ENCODE measurements at regions of chr1 and their contacts with region 1.

Region 1: GRCh38 chr1:8423650-8424538 is 106.0 kb downstream of the SLC45A1 start:
- DNase-seq: peak in 5 of 9 donors; percentile 28 to 68 (median 42)
- ATAC-seq: peak; percentile 56
- H3K4me3 ChIP-seq: peak overlapping the region; percentile 96
- H3K4me3 Mint-ChIP-seq: peak overlapping the region in 9 of 10 donors; percentile 81 to 97 (median 92)
- H3K27ac ChIP-seq: peak overlapping the region; percentile 83
- H3K27ac Mint-ChIP-seq: peak overlapping the region; percentile 85 to 99 (median 94)
- H3K4me1 ChIP-seq: peaks cover 57 to 68% of the 10 kb centered on the region in 2 donors
- H3K4me1 Mint-ChIP-seq: peaks cover 39 to 47% (median 45%) of the 10 kb centered on the region in 7 donors
- H3K27me3 ChIP-seq: no peaks in the 10 kb centered on the region
- H3K27me3 Mint-ChIP-seq: no peaks in the 10 kb centered on the region

Region 2: GRCh38 chr1:8197493-8198282 is 226.2 kb before region 1 on chr1:
- CTCF ChIA-PET with region 1: no interaction called
- POLR2A ChIA-PET with region 1: no interaction called
- intact Hi-C with region 1: no loop called
- DNase-seq: no peak
- ATAC-seq: no peak
- H3K4me3 ChIP-seq: no peak overlapping the region
- H3K4me3 Mint-ChIP-seq: peak overlapping the region in 1 of 10 donors; percentile 7
- H3K27ac ChIP-seq: no peak overlapping the region
- H3K27ac Mint-ChIP-seq: no peak overlapping the region
- H3K4me1 ChIP-seq: no peaks in the 10 kb centered on the region
- H3K4me1 Mint-ChIP-seq: peaks cover 0 to 20% (median 9%) of the 10 kb centered on the region in 7 donors
- H3K27me3 ChIP-seq: no peaks in the 10 kb centered on the region
- H3K27me3 Mint-ChIP-seq: peaks cover 0 to 10% (median 0%) of the 10 kb centered on the region in 5 donors

Region 3: GRCh38 chr1:8382051-8382505 is 41.8 kb before region 1 on chr1:
- CTCF ChIA-PET with region 1: interaction called, 4 read pairs
- POLR2A ChIA-PET with region 1: interaction called, 3 read pairs
- intact Hi-C with region 1: loop called in 1 of 2 experiments (anchors 2 kb)
- DNase-seq: no peak
- ATAC-seq: no peak
- H3K4me3 ChIP-seq: no peak overlapping the region
- H3K4me3 Mint-ChIP-seq: peak overlapping the region; percentile 19 to 87 (median 78)
- H3K27ac ChIP-seq: peak overlapping the region; percentile 52
- H3K27ac Mint-ChIP-seq: peak overlapping the region in 7 of 9 donors; percentile 23 to 98 (median 90)
- H3K4me1 ChIP-seq: peaks cover 30 to 61% of the 10 kb centered on the region in 2 donors
- H3K4me1 Mint-ChIP-seq: peaks cover 51 to 96% (median 91%) of the 10 kb centered on the region in 7 donors
- H3K27me3 ChIP-seq: no peaks in the 10 kb centered on the region
- H3K27me3 Mint-ChIP-seq: no peaks in the 10 kb centered on the region

Region 4: DNA sequence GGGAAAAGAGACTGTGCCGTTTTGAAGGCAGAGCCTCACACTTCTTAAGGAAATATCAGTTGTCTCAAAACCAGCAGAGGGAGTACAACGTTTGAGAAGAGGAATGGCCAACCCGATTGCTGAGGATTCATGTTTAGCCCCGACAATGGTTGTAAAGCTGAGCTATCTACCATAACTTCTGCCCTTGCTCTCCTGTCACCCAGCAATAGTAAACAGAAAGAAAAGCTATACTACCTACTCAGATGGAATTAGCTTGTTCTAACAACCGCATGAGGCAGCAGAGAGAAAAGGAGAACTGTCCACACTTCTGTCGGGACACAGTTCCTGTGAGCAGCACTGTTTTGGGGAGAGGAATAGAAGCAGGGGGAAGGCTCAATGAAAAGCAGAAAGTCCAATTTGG is 14.8 kb before region 1 on chr1:
- CTCF ChIA-PET with region 1: interaction called, 14 read pairs
- POLR2A ChIA-PET with region 1: interaction called, 7 read pairs
- intact Hi-C with region 1: loop called (anchors 1 to 2 kb)
- DNase-seq: peak in 5 of 9 donors; percentile 12 to 45 (median 38)
- ATAC-seq: peak; percentile 82
- H3K4me3 ChIP-seq: no peak overlapping the region
- H3K4me3 Mint-ChIP-seq: peak overlapping the region; percentile 38 to 74 (median 68)
- H3K27ac ChIP-seq: peak overlapping the region; percentile 49
- H3K27ac Mint-ChIP-seq: peak overlapping the region; percentile 22 to 90 (median 81)
- H3K4me1 ChIP-seq: peaks cover 25 to 44% of the 10 kb centered on the region in 2 donors
- H3K4me1 Mint-ChIP-seq: peaks cover 47 to 87% (median 72%) of the 10 kb centered on the region in 7 donors
- H3K27me3 ChIP-seq: no peaks in the 10 kb centered on the region
- H3K27me3 Mint-ChIP-seq: no peaks in the 10 kb centered on the region

Region 5: GRCh38 chr1:8477166-8477982 is 53.5 kb after region 1 on chr1:
- CTCF ChIA-PET with region 1: no interaction called
- POLR2A ChIA-PET with region 1: interaction called, 7 read pairs
- intact Hi-C with region 1: loop called (anchors 2 kb)
- DNase-seq: no peak
- ATAC-seq: no peak
- H3K4me3 ChIP-seq: no peak overlapping the region
- H3K4me3 Mint-ChIP-seq: peak overlapping the region in 1 of 10 donors; percentile 23
- H3K27ac ChIP-seq: no peak overlapping the region
- H3K27ac Mint-ChIP-seq: peak overlapping the region in 7 of 9 donors; percentile 2 to 84 (median 55)
- H3K4me1 ChIP-seq: peaks cover 9 to 12% of the 10 kb centered on the region in 2 donors
- H3K4me1 Mint-ChIP-seq: peaks cover 17 to 58% (median 38%) of the 10 kb centered on the region in 7 donors
- H3K27me3 ChIP-seq: no peaks in the 10 kb centered on the region
- H3K27me3 Mint-ChIP-seq: no peaks in the 10 kb centered on the region

Region 6: GRCh38 chr1:8525558-8526275 is 101.8 kb after region 1 on chr1:
- CTCF ChIA-PET with region 1: interaction called, 5 read pairs
- POLR2A ChIA-PET with region 1: interaction called, 14 read pairs
- intact Hi-C with region 1: loop called (anchors 1 to 2 kb)
- DNase-seq: peak; percentile 31 to 95 (median 88)
- ATAC-seq: peak; percentile 96
- H3K4me3 ChIP-seq: peak overlapping the region; percentile 60
- H3K4me3 Mint-ChIP-seq: no peak overlapping the region
- H3K27ac ChIP-seq: peak overlapping the region; percentile 95
- H3K27ac Mint-ChIP-seq: no peak overlapping the region
- H3K4me1 ChIP-seq: peaks cover 12 to 30% of the 10 kb centered on the region in 2 donors
- H3K4me1 Mint-ChIP-seq: peaks cover 22 to 57% (median 35%) of the 10 kb centered on the region in 7 donors
- H3K27me3 ChIP-seq: no peaks in the 10 kb centered on the region
- H3K27me3 Mint-ChIP-seq: no peaks in the 10 kb centered on the region

Region 7: DNA sequence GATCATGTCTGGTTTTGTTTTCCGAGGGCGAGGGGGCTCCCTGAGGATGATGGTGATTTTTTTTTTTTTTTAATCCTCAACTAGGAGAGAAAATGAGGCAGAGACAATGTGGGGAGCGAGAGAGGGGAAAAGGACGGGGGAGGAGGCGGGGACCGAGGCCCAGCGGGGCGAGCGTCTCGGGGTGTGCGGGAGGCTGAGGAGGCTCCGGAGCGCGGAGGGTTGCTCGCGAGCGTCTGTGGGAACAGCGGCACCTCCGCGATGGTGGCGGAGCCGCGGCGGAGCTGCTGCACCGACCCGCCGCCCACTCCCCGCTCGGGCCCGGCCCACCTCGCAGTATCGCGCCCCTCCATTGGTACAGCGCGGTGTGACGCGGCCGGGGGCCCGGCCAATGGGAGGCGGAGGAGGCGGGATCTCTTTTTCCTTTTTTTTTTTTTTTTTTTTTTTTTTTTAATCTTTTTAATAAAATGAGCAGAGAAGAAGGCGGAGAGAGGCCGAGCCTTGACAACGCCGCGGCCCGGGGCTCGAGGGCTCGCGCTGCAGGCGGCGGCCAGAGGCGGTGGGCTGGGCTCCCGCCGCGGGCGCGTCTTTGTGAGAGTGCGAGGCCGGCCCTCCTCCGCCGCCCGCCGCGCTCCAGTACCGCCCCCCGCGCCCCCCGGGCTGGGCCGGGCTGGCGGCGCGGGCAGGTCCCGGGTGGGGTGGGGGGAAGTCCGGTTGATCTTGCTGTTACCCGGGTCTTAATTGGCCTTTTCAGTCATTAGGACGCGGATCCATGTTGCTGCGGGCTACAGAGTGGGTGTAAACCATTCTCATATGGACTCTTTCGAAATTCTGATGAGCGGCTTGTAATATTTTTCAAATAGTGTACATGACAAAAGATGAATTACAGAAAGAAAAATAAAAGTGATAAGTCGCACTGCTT is 393.8 kb after region 1 on chr1 and contains the start of gene RERE:
- CTCF ChIA-PET with region 1: no interaction called
- POLR2A ChIA-PET with region 1: no interaction called
- intact Hi-C with region 1: no loop called
- DNase-seq: peak; percentile 92 to 100 (median 99)
- ATAC-seq: peak; percentile 99
- H3K4me3 ChIP-seq: peak within 1 kb of the TSS; percentile 96
- H3K4me3 Mint-ChIP-seq: peak within 1 kb of the TSS; percentile 84 to 99 (median 92)
- H3K27ac ChIP-seq: peak within 1 kb of the TSS; percentile 96
- H3K27ac Mint-ChIP-seq: peak within 1 kb of the TSS; percentile 83 to 99 (median 95)
- H3K4me1 ChIP-seq: peaks cover 10 to 15% of the 10 kb centered on the region in 2 donors
- H3K4me1 Mint-ChIP-seq: peaks cover 26 to 46% (median 41%) of the 10 kb centered on the region in 7 donors
- H3K27me3 ChIP-seq: no peaks in the 10 kb centered on the region
- H3K27me3 Mint-ChIP-seq: peaks cover 0 to 23% (median 0%) of the 10 kb centered on the region in 5 donors
- total RNA-seq, gene RERE: 75.6 to 114 (median 107) TPM

Measured in naive thymus-derived CD4-positive, alpha-beta T cell (primary cell).